OCI-LY7 (cell line): ENCODE measurements at regions of chr3 and their contacts with region 1.

Region 1: DNA sequence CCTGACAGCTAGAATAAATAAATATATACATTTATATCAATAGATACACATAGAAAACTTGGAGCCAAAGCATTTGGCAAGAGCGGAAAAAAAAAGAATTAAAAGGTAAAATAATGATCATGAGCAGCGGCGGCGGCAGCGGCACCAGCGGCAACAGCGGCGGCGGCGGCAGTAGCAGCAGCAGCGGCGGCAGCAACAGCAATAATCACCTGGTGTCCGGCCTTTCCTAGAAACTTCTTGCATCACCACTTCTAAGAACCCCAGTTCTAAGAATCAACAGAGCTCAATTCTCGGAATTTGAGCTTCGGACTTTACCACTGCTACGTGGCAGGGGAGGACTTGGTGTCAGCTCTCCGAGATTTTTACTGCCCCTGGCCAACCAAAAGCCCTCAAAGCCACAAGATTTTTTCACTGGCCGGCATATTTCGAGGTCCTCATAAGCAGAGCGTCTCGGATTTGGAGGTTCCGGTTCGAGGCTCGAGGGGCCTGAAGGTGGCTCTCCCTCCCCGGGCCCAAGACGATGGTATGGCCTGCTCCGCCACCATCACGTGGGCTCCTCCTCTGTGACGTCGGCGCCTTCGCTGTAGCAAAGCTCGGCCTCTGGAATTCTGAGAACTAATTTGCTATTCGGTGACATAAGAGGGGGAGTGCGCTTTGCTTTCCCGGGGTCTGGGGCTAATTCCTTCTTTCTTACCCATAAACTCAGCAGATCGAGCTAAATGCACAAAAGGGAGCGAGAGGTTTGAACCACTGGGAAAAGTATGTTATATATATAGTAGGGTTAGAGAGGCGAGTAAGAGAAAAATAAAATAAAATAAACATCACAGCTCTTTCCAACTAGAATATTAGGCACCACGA is at the start of gene BCL6:
- DNase-seq: peak; percentile 98
- H3K4me3 ChIP-seq: peak within 1 kb of the TSS; percentile 86
- H3K27ac ChIP-seq: peak within 1 kb of the TSS; percentile 90
- H3K4me1 ChIP-seq: peaks cover 39% of the 10 kb centered on the region
- CTCF ChIP-seq: no peak
- total RNA-seq, gene BCL6: 62.4 and 65.6 TPM in 2 replicates

Region 2: DNA sequence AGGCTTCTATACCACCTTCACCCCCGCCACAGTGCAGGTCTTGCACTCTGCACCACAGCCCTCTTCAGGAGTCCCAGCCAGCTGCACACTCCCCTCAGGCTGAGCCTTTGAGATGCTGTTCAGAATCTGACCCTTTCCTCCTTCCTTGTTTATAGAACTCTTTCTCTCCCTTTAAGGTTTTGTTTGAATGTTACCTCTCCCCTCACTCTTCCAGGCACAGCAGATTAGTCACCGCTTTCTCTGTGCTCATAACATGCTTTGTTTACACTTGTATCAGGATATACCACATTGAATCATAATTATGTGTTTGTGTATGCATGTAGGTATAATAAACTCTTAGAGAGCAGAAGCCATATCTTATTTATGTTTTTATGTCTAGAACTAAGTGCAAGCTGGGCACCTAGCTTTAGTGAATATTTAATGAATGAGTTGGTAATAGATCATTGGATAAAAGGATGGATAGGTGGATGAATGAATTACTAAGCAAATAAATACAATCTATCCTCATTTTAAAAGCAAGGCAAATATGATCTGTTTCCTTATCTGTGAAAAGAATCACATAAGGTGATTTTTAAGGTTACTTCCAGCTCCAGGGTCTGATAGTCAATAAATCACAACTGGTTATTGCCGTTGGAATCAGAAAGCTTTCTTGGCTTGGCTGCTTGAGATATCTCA is 168.3 kb after region 1 on chr3:
- CTCF ChIA-PET with region 1: interaction called, 9 read pairs
- POLR2A ChIA-PET with region 1: interaction called, 59 read pairs
- intact Hi-C with region 1: no loop called
- DNase-seq: peak; percentile 73
- H3K4me3 ChIP-seq: peak overlapping the region; percentile 9
- H3K27ac ChIP-seq: peak overlapping the region; percentile 97
- H3K4me1 ChIP-seq: peaks cover 90% of the 10 kb centered on the region
- CTCF ChIP-seq: no peak

Region 3: DNA sequence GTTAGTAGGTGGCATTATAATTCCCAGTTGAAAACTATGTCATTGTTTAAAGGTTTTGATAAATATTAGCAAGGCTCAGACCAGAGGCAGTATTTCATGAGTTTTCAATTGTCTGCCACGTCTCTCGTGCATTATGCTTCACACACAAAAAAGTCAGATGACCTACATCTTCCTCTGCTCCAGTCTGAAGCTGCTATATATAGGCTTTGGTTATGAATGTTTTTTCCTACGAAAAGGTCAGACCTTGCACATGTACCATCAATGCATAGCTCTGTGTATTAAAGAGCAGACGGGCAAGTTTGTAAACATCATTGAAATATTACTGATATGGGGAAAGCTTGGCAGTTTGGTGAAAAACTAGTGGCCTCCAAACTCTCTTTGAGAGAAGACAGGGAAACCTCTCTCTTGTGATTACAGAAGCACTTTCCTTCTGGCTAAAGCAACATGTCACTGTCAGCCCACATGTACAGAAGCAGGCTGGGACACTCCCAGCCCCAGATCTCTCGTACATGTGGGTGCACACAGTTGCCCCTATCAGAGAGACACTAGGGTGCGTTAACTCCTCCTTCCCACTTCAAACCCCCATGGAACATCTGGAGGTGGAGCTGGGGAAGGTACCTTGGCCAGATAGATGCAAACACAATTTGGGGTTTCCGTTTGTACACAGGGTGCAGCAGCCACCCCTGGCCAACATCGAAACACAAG is 183.8 kb after region 1 on chr3:
- CTCF ChIA-PET with region 1: interaction called, 4 read pairs
- POLR2A ChIA-PET with region 1: interaction called, 420 read pairs
- intact Hi-C with region 1: no loop called
- DNase-seq: no peak
- H3K4me3 ChIP-seq: no peak overlapping the region
- H3K27ac ChIP-seq: peak overlapping the region; percentile 4
- H3K4me1 ChIP-seq: peaks cover 89% of the 10 kb centered on the region
- CTCF ChIP-seq: no peak

Region 4: DNA sequence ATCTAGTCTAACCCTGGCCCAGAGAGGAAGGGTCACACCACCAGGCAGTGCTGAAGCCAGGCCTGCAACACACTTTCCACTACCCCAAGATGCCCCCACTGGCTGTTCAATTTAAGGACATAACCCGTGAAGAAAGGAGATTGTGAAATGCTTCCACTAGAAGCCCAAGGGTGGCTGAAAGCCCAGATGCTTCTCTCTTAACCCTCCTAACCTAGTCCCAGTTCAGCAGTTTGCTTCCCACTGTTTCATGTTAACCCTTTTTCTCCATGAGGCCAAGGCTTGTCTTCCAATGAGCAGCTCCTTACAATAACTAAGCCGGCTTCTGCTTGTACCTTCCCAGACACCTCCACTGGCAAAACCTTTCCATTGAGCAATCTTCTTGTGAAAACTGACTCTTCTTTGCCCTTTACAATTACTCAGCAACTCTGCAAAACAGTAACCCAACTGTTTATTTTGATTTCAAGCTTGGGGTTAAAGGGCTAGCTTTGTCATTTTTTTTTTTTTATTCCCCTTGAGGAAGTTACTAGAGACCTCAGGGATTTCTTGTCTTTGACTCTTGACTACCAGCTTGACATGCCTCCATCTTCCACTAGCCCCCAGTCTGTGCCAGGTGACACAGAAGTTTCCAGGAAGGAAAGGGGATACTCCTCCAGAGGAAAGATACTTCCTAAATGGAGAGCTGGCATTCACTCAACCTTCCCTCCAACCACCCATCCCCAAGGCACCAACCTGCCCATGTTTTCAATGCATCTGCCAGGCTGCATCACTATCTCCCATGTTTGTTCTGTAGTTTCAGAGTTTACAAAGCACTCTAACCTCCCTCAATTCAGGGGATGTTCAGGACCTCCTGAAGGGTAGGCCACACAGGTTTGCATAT is 209.9 kb after region 1 on chr3:
- CTCF ChIA-PET with region 1: interaction called, 3 read pairs
- POLR2A ChIA-PET with region 1: interaction called, 531 read pairs
- intact Hi-C with region 1: loop called (anchors 1 kb)
- DNase-seq: no peak
- H3K4me3 ChIP-seq: no peak overlapping the region
- H3K27ac ChIP-seq: peak overlapping the region; percentile 99
- H3K4me1 ChIP-seq: peaks cover 100% of the 10 kb centered on the region
- CTCF ChIP-seq: 0 out of 2 replicates have a peak, but pooled peaks have one; percentile 21

Region 5: GRCh38 chr3:188000361-188000861 is 255.0 kb after region 1 on chr3:
- CTCF ChIA-PET with region 1: no interaction called
- POLR2A ChIA-PET with region 1: interaction called, 10 read pairs
- intact Hi-C with region 1: loop called (anchors 1 kb)
- DNase-seq: peak; percentile 82
- H3K4me3 ChIP-seq: peak overlapping the region; percentile 60
- H3K27ac ChIP-seq: peak overlapping the region; percentile 96
- H3K4me1 ChIP-seq: peaks cover 83% of the 10 kb centered on the region
- CTCF ChIP-seq: no peak

Region 6: GRCh38 chr3:188446014-188446413 is 700.6 kb after region 1 on chr3:
- CTCF ChIA-PET with region 1: interaction called, 3 read pairs
- POLR2A ChIA-PET with region 1: no interaction called
- intact Hi-C with region 1: loop called (anchors 2 kb)
- DNase-seq: peak; percentile 90
- H3K4me3 ChIP-seq: peak overlapping the region; percentile 46
- H3K27ac ChIP-seq: peak overlapping the region; percentile 88
- H3K4me1 ChIP-seq: peaks cover 48% of the 10 kb centered on the region
- CTCF ChIP-seq: no peak